Activated CD4-positive, alpha-beta memory T cell treated with anti-CD3 and anti-CD28 coated beads for 36 hours (primary cell): ENCODE measurements at regions of chr1 and their contacts with region 1.

Region 1: GRCh38 chr1:41739061-41739955 is 179.4 kb downstream of the HIVEP3 start:
- DNase-seq: peak; percentile 95
- H3K4me3 Mint-ChIP-seq: peak overlapping the region; percentile 66
- H3K27ac Mint-ChIP-seq: peak overlapping the region; percentile 92
- H3K4me1 Mint-ChIP-seq: peaks cover 84% of the 10 kb centered on the region
- H3K27me3 Mint-ChIP-seq: no peaks in the 10 kb centered on the region

Region 2: GRCh38 chr1:41639332-41639936 is 99.9 kb before region 1 on chr1:
- CTCF ChIA-PET with region 1: no interaction called
- POLR2A ChIA-PET with region 1: interaction called, 6 read pairs
- intact Hi-C with region 1: loop called (anchors 1 kb)
- DNase-seq: peak; percentile 87
- H3K4me3 Mint-ChIP-seq: peak overlapping the region; percentile 59
- H3K27ac Mint-ChIP-seq: no peak overlapping the region
- H3K4me1 Mint-ChIP-seq: peaks cover 12% of the 10 kb centered on the region
- H3K27me3 Mint-ChIP-seq: no peaks in the 10 kb centered on the region

Region 3: DNA sequence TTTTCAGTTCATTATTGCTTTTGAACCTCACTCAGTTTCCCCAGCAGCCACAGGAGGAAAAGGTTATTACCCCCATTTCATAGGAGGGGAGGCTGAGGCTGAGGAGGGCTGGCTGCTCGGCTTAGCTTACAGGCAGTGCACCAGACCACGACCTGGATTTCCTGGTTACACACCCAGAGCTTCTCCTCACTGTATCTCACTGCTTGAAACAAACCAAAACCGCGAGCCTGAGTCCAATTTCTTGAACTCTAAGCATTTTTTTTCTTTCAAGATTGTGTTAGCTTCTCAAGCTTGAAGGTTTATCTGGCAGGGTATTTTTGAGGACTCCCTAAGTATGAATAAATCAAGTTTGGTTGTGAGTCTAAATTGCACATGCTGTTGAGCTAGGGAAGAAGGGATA is 65.9 kb before region 1 on chr1:
- CTCF ChIA-PET with region 1: interaction called, 3 read pairs
- POLR2A ChIA-PET with region 1: interaction called, 8 read pairs
- intact Hi-C with region 1: loop called (anchors 1 kb)
- DNase-seq: peak; percentile 72
- H3K4me3 Mint-ChIP-seq: peak overlapping the region; percentile 53
- H3K27ac Mint-ChIP-seq: peak overlapping the region; percentile 76
- H3K4me1 Mint-ChIP-seq: peaks cover 94% of the 10 kb centered on the region
- H3K27me3 Mint-ChIP-seq: no peaks in the 10 kb centered on the region

Region 4: DNA sequence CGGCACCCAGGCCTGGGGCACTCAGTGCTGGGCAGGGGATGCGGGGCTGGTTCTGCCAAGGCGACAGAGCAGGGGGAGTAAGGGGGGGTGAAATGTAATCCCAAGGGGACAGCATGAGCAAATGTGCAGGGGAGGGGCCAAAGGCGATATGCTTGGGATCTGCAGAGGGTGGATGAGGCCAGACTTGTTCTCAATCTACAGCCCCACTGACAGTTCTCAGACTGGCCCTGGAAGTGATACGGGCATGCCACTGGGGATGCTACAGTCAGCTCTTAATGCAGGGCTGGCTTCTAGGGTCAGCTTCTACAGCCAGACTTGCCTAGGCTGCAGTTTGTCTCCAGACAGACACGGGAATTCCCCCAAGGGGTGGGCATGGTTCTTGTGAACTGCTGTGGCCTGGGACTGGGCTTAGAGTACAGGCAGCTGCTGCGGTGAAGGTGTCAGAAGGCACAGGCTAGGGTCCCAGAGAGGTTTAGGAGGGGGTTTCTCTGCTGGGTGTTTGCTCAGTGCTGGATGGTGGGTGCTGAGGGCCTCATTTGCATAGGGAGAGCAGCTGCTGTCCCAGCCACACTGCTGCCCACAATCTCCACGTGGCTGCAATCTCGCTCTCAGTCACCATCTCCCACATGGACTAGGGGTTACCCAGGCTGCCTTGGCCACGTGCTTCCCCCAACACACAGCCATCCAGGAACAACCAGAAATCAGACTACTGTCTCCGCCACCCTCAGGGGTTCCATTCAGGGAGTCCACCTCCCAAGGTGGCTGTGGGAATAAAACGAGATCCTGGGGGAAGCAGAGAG is 10.7 kb before region 1 on chr1:
- CTCF ChIA-PET with region 1: interaction called, 5 read pairs
- POLR2A ChIA-PET with region 1: interaction called, 17 read pairs
- intact Hi-C with region 1: loop called (anchors 1 kb)
- DNase-seq: peak; percentile 89
- H3K4me3 Mint-ChIP-seq: no peak overlapping the region
- H3K27ac Mint-ChIP-seq: peak overlapping the region; percentile 84
- H3K4me1 Mint-ChIP-seq: peaks cover 39% of the 10 kb centered on the region
- H3K27me3 Mint-ChIP-seq: no peaks in the 10 kb centered on the region

Region 5: DNA sequence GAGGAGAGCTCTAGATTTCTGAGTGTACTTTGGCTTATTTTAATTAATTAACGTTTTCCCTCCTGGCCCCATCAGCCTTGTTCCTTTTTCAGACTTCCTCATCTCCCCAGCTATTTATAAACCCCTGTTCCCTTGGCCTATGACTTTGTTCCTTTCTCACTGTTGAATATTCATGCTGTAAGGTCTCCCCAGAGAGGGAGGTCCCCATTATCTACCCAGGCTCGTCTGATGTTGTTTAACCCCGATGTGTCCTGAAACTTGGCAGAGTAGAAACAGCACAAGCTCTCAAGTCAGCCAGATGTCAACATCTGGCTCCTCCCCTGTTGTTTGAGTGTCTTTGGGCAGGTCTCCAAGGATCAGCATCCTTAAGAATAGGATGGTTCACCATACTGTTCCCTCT is 25.8 kb after region 1 on chr1:
- CTCF ChIA-PET with region 1: no interaction called
- POLR2A ChIA-PET with region 1: no interaction called
- intact Hi-C with region 1: no loop called
- DNase-seq: no peak
- H3K4me3 Mint-ChIP-seq: no peak overlapping the region
- H3K27ac Mint-ChIP-seq: no peak overlapping the region
- H3K4me1 Mint-ChIP-seq: no peaks in the 10 kb centered on the region
- H3K27me3 Mint-ChIP-seq: no peaks in the 10 kb centered on the region

Region 6: DNA sequence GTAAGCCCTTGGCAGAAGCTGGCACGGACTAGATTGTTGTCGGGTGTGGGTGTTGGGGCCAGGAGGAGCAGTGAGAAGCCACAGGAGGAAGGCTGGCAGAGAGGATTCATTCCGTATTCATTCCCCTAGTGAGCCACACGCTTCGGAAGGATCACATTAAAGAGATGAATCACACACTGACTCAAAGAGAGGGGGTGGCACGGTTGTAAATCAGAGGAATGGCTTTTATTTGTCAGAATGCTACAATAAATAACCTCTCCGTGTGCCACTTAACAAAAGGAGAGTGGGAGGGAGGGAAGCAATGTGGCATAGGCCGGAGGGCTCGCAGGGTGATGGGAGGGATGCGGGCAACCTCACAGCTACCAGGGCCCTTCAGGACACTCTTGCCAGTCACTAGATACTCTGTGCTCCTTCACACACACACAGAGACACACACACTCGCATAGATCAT is 43.9 kb after region 1 on chr1:
- CTCF ChIA-PET with region 1: interaction called, 3 read pairs
- POLR2A ChIA-PET with region 1: interaction called, 4 read pairs
- intact Hi-C with region 1: loop called (anchors 1 kb)
- DNase-seq: peak; percentile 76
- H3K4me3 Mint-ChIP-seq: no peak overlapping the region
- H3K27ac Mint-ChIP-seq: peak overlapping the region; percentile 68
- H3K4me1 Mint-ChIP-seq: peaks cover 29% of the 10 kb centered on the region
- H3K27me3 Mint-ChIP-seq: no peaks in the 10 kb centered on the region

Region 7: GRCh38 chr1:41802532-41803501 is 63.5 kb after region 1 on chr1:
- CTCF ChIA-PET with region 1: interaction called, 5 read pairs
- POLR2A ChIA-PET with region 1: interaction called, 4 read pairs
- intact Hi-C with region 1: loop called (anchors 1 kb)
- DNase-seq: no peak
- H3K4me3 Mint-ChIP-seq: no peak overlapping the region
- H3K27ac Mint-ChIP-seq: peak overlapping the region; percentile 79
- H3K4me1 Mint-ChIP-seq: peaks cover 83% of the 10 kb centered on the region
- H3K27me3 Mint-ChIP-seq: no peaks in the 10 kb centered on the region

Region 8: DNA sequence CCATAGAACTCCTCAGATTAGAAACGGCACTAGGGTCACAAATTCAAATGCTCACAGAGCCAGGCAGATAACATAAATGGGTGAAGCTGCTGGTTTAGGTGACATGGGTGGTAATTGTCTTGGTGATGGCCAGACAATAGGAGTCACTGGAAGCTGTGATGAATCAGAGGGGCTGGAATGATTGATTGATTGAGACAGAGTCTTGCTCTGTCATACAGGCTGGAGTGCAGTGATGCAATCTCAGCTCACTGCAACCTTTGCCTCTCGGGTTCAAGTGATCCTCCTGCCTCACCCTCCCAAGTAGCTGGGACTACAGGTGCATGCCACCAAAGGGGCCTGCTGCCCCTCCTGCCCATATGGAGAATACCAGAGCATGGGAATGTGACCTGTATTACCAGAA is 116.4 kb after region 1 on chr1:
- CTCF ChIA-PET with region 1: no interaction called
- POLR2A ChIA-PET with region 1: no interaction called
- intact Hi-C with region 1: no loop called
- DNase-seq: no peak
- H3K4me3 Mint-ChIP-seq: no peak overlapping the region
- H3K27ac Mint-ChIP-seq: no peak overlapping the region
- H3K4me1 Mint-ChIP-seq: peaks cover 13% of the 10 kb centered on the region
- H3K27me3 Mint-ChIP-seq: no peaks in the 10 kb centered on the region

Region 9: GRCh38 chr1:41919764-41920397 is 180.6 kb after region 1 on chr1:
- CTCF ChIA-PET with region 1: no interaction called
- POLR2A ChIA-PET with region 1: no interaction called
- intact Hi-C with region 1: loop called (anchors 5 kb)
- DNase-seq: peak; percentile 94
- H3K4me3 Mint-ChIP-seq: peak overlapping the region; percentile 92
- H3K27ac Mint-ChIP-seq: peak overlapping the region; percentile 97
- H3K4me1 Mint-ChIP-seq: peaks cover 59% of the 10 kb centered on the region
- H3K27me3 Mint-ChIP-seq: no peaks in the 10 kb centered on the region